PC-9 (cell line): ENCODE measurements at regions of chr1 and their contacts with region 1.

Region 1: GRCh38 chr1:223683586-223684487 is 18.3 kb upstream of the CAPN8 start:
- DNase-seq: peak; percentile 58 to 76
- H3K4me3 ChIP-seq: no peak overlapping the region
- H3K27ac ChIP-seq: no peak overlapping the region
- H3K4me1 ChIP-seq: no peaks in the 10 kb centered on the region
- H3K27me3 ChIP-seq: no peaks in the 10 kb centered on the region
- CTCF ChIP-seq: peak; percentile 90

Region 2: DNA sequence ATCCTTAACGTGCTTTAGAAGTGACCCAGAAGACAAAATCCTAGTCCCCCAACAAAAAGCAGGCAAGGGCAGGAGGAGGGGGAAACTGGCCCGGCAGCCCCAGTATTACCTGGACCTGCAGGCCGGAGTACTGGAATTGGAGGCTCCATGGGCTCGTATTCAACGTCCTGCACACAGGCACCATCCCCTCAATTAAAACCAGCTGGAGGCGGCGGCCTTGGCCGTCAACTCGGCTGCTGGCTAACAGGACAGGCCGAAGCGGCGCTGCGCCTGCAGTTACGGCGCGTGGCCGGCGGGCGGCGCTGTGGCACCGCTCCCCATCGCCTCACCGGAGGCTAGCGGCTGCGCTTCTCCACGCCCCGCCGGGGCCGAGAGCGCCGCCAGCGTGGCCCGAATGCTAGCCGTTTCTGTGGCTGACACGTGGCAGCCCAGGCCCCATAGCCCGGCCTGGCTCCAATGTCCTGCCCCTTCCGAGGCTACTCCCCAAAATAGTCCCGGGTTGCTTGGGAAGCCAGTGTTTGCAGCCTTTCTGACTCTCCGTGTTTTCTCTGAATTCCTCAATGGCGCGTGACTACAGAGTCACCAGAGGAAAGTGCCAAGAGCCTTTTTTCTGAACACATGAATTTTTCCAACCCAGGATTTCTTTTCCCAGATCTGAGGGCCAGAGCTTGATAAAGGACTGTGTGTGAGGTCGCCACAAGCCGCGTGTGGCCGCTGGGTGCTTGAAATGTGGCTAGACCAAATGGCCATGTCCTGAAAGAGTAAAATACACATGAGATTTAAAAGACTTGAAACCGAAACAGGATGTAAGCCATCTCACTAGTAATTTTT is 1218.4 kb before region 1 on chr1:
- CTCF ChIA-PET with region 1: no interaction called
- POLR2A ChIA-PET with region 1: no interaction called
- intact Hi-C with region 1: loop called (anchors 10 kb)
- DNase-seq: peak; percentile 87 to 96
- H3K4me3 ChIP-seq: peak overlapping the region; percentile 60
- H3K27ac ChIP-seq: peak overlapping the region; percentile 96
- H3K4me1 ChIP-seq: peaks cover 9% of the 10 kb centered on the region
- H3K27me3 ChIP-seq: no peaks in the 10 kb centered on the region
- CTCF ChIP-seq: peak; percentile 97

Region 3: DNA sequence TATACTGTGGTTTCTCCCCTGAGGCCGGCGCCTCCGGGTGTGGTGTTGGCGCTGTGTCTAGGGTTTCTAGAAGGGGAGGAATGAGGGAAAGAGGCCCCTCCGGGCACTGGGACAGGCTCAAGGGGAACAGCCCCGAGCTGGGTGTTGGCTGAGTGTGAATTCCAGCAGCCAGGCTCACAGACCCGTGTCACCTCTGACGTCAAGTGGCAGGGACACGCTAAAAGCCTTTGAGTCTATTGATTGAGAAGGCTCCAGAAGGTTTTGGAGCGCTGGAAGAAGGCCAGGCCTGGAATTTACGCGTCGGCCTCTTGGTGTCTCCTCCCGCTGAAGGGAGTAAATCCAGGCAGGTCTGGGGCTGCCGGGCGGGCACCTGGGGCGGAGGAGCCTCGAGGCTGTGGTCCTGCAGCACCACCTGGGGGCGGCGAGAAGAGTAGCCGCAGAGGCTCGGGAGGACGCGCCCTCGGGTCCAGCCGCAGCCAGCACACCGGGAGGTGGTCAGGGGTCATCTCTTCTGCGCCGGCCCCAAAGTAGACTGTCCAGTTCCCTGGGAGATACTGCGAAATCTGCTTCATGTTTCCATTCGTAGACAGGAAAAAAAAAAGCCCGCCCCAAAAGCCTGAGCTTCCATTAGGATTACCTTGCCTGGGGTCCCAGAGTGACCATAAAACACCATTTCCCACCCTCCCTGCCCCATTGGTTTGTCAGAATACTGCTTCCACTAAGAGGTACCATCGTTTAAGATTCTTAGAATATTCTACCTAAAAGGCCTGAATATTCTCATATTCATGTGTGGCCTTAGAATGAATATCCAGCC is 602.4 kb before region 1 on chr1:
- CTCF ChIA-PET with region 1: no interaction called
- POLR2A ChIA-PET with region 1: no interaction called
- intact Hi-C with region 1: loop called (anchors 5 kb)
- DNase-seq: peak; percentile 95 to 97
- H3K4me3 ChIP-seq: peak overlapping the region; percentile 27; the same call in 1 of the 2 replicates
- H3K27ac ChIP-seq: no peak overlapping the region
- H3K4me1 ChIP-seq: no peaks in the 10 kb centered on the region
- H3K27me3 ChIP-seq: peaks cover 13% of the 10 kb centered on the region
- CTCF ChIP-seq: peak; percentile 93

Region 4: GRCh38 chr1:223095870-223096269 is 588.0 kb before region 1 on chr1:
- CTCF ChIA-PET with region 1: no interaction called
- POLR2A ChIA-PET with region 1: no interaction called
- intact Hi-C with region 1: no loop called
- DNase-seq: no peak
- H3K4me3 ChIP-seq: no peak overlapping the region
- H3K27ac ChIP-seq: no peak overlapping the region
- H3K4me1 ChIP-seq: no peaks in the 10 kb centered on the region
- H3K27me3 ChIP-seq: 0 out of 2 replicates have a peak, but pooled peaks cover 7% of the 10 kb centered on the region
- CTCF ChIP-seq: no peak

Region 5: GRCh38 chr1:223175032-223175431 is 508.8 kb before region 1 on chr1:
- CTCF ChIA-PET with region 1: no interaction called
- POLR2A ChIA-PET with region 1: no interaction called
- intact Hi-C with region 1: loop called (anchors 1 kb)
- DNase-seq: no peak
- H3K4me3 ChIP-seq: no peak overlapping the region
- H3K27ac ChIP-seq: no peak overlapping the region
- H3K4me1 ChIP-seq: peaks cover 16% of the 10 kb centered on the region
- H3K27me3 ChIP-seq: no peaks in the 10 kb centered on the region
- CTCF ChIP-seq: peak; percentile 50

Region 6: DNA sequence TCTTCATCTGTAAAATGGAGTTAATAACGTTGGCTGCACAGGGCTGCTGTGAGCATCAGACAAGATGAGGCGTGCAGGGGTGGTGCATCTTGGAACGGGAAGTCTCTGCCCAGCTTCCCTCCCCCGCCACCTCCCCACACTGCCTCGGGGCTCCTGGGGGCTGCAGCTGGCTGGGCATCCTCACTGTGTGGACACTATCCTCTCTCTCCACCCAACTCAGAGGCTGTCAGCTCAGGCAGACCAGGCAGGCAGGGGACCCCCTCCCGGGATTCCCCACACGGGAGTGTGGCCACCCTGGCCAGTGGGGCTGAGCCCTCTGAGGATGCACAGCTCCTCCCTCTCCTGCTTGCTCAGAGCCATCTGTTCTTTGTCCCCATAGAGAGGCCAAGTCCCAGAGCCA is 167.9 kb before region 1 on chr1:
- CTCF ChIA-PET with region 1: interaction called, 16 read pairs
- POLR2A ChIA-PET with region 1: no interaction called
- intact Hi-C with region 1: no loop called
- DNase-seq: no peak
- H3K4me3 ChIP-seq: no peak overlapping the region
- H3K27ac ChIP-seq: no peak overlapping the region
- H3K4me1 ChIP-seq: peaks cover 17% of the 10 kb centered on the region
- H3K27me3 ChIP-seq: 0 out of 2 replicates have a peak, but pooled peaks cover 3% of the 10 kb centered on the region
- CTCF ChIP-seq: no peak

Region 7: DNA sequence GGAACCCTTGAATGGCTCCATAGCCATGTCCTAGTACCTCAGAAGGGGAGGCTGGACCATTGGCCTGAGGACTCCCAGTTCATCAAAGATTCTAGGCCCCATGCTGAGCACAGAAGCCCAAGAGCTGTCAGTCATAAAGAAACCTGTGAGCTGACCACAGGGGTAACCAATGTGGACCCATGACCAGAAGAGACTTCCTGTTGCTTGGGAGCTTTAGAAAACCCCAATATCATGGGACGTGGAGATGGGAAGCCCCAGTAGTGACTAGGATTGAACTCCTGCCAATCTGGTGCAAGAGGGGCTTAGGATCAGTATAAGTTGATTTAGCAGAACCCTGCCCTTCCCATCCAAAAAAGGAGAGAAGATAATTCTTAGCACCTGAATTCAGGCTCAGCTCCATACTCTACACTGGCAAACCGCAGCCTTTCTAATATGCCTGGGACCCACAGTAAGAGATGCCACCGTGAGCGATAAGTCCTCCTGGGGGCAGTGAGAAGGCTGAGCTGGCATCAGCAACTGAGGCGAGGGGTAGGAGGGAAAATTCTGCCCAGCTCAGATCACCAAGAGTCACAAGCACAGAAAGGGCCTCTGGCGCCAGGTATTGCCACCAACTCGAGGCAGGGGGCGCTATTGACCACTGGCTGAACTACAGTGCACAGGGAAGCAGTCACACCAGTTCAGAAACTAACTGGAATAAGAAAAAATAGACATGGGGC is 127.3 kb before region 1 on chr1:
- CTCF ChIA-PET with region 1: interaction called, 20 read pairs
- POLR2A ChIA-PET with region 1: no interaction called
- intact Hi-C with region 1: no loop called
- DNase-seq: peak; percentile 57 to 80
- H3K4me3 ChIP-seq: no peak overlapping the region
- H3K27ac ChIP-seq: no peak overlapping the region
- H3K4me1 ChIP-seq: no peaks in the 10 kb centered on the region
- H3K27me3 ChIP-seq: no peaks in the 10 kb centered on the region
- CTCF ChIP-seq: peak; percentile 92